ENCODE measurements at regions of chr17 and their contacts with region 1.

Region 1: GRCh38 chr17:76557368-76558197 is 17.7 kb downstream of the PRCD start:
- DNase-seq: peak; percentile 91 to 96
- ATAC-seq: peak; percentile 90 to 95 (median 93)
- H3K4me3 ChIP-seq: peak overlapping the region; percentile 49 to 88 (median 76)
- H3K27ac ChIP-seq: peak overlapping the region; percentile 70 to 94 (median 83)
- H3K4me1 ChIP-seq: peaks cover 0 to 67% (median 63%) of the 10 kb centered on the region in 9 donors
- H3K27me3 ChIP-seq: no peaks in the 10 kb centered on the region
- CTCF ChIP-seq: peak; percentile 32 to 69 (median 59)

Region 2: DNA sequence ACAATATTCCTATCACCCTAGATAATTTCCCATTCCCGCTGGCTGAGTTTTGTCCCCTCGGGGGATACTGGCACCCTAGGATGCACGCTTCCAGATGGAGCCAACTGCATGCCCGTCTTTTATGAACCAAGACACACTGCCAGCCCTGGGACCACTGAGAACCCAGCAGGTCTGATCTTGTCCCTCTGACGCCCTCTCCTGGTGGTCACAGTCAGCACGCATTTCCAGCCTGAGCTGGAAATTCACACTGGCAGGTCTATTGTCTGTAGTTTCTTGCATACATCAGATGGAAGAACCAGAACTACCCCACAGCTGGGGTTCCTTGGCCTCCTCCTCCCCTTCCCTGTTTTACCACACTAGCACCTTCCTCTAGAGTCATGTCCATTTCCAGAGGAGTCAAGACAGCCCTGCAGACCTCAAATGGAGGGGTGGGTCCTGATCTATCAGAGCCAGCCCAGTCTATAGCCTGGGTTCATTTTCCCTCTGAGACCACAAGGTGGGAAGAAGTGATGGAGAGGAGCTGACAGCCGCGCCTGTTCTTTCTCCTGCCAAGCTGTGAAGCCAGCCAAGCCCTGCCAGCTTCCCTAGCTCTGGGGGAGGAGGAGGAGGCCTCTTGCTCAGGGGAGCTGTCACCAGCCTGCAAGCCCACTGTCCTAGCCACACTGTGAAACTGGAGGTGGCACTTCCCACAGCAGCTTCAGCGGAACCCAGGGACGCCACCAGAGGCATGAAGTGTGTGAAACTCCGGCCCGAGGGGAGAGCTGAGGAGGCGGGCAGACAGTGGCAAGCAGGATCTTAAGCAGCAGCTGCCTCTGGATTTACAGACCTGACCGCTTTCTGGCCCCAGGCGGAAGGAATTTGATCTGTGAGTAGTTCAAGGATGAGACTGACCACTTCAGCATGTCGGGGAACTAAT is 123.9 kb after region 1 on chr17:
- intact Hi-C with region 1: loop called in 1 of 10 experiments (anchors 5 kb)
- DNase-seq: peak; percentile 68 to 73
- ATAC-seq: peak; percentile 30 to 76 (median 62)
- H3K4me3 ChIP-seq: peak overlapping the region in 3 of 10 donors; percentile 6 to 14 (median 7)
- H3K27ac ChIP-seq: peak overlapping the region; percentile 49 to 99 (median 90)
- H3K4me1 ChIP-seq: peaks cover 32 to 62% (median 52%) of the 10 kb centered on the region in 9 donors
- H3K27me3 ChIP-seq: no peaks in the 10 kb centered on the region
- CTCF ChIP-seq: peak; percentile 50 to 80 (median 73)